SK-N-SH (cell line): ENCODE measurements at regions of chr3 and their contacts with region 1.

Region 1: DNA sequence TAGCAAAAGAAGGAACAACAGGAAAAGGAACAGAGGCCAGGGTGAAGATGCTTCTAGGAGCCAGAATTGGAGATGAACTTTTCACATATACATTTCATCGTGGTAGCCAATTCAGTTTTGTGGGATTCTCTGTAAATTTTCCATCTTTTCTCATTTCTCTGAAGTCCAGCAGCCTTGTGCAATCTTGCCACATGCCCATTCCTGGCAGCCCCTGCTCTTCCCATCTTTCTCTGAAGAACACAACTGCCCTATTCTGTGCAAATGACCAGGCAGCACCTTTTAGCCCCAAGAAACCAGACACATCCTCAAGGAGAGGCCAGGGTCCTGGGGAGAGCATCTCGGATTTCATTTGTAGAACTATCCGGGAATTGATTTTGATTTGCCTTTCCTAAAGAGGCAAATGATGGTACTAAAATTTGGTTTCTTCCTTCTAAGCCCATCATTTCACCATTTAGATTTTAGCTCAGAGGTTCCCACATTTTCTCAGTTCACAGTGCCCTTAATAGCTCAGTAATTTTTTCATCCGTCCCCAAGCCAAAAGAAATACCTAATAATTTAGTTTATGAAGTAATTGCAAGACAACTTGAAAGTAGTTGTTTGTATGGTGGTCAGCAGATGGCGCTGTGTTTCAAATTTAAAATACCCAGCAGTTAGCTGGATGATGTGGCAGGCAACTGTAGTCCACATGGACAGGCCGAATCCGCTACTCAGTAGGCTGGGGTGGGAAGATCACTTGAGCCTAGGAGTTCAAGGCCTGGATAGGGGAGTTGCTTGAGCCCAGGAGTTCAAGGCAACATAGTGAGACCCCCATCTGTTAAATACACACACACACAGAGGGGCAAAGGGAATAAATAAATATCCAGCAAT is 61.3 kb upstream of the ACKR4 start:
- DNase-seq: peak; percentile 52
- H3K4me3 ChIP-seq: no peak overlapping the region; a peak in 1 of 4 replicates
- H3K27ac ChIP-seq: peak overlapping the region in 1 of 2 experiments; percentile 39; a peak in 1 of 4 replicates
- H3K4me1 ChIP-seq: peaks cover 0 to 6% of the 10 kb centered on the region in 2 experiments; a peak in 1 of 4 replicates
- H3K27me3 ChIP-seq: no peaks in the 10 kb centered on the region
- CTCF ChIP-seq: peak; percentile 74
- EP300 ChIP-seq: no peak
- RAD21 ChIP-seq: peak; percentile 76

Region 2: GRCh38 chr3:132522353-132522752 is 13.5 kb before region 1 on chr3:
- CTCF ChIA-PET with region 1: interaction called, 20 read pairs
- POLR2A ChIA-PET with region 1: no interaction called
- DNase-seq: no peak
- H3K4me3 ChIP-seq: no peak overlapping the region
- H3K27ac ChIP-seq: no peak overlapping the region
- H3K4me1 ChIP-seq: no peaks in the 10 kb centered on the region
- H3K27me3 ChIP-seq: no peaks in the 10 kb centered on the region
- CTCF ChIP-seq: no peak
- EP300 ChIP-seq: no peak
- RAD21 ChIP-seq: no peak

Region 3: GRCh38 chr3:132549890-132550578 is 14.2 kb after region 1 on chr3:
- CTCF ChIA-PET with region 1: interaction called, 32 read pairs
- POLR2A ChIA-PET with region 1: no interaction called
- DNase-seq: no peak
- H3K4me3 ChIP-seq: no peak overlapping the region
- H3K27ac ChIP-seq: peak overlapping the region; percentile 60 to 72; a peak in 3 of 4 replicates
- H3K4me1 ChIP-seq: peaks cover 0 to 20% of the 10 kb centered on the region in 2 experiments; a peak in 2 of 4 replicates
- H3K27me3 ChIP-seq: no peaks in the 10 kb centered on the region
- CTCF ChIP-seq: no peak
- EP300 ChIP-seq: 0 out of 4 replicates have a peak, but pooled peaks of 1 of the 2 experiments have one; percentile 55
- RAD21 ChIP-seq: no peak

Region 4: DNA sequence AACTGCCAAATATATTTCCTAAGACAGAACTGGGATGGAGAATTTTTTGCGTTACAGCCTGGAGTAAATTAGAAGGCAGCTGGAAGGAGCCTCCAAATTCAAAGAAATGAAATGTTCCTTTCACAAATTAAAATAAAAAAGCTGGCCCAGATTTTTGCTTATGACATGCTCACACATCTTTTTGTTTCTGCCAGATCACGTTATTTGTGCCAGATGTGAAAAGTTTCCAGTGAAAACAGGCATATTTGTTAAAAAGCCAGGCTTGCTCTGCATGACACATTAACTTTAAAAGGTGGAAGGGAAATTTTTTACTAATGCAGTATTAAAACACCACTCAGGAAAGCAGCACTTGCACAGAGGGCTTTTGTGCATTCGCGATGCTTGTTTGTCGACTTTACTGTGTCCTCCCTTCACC is 38.0 kb after region 1 on chr3:
- CTCF ChIA-PET with region 1: interaction called, 12 read pairs
- POLR2A ChIA-PET with region 1: no interaction called
- DNase-seq: no peak
- H3K4me3 ChIP-seq: no peak overlapping the region
- H3K27ac ChIP-seq: peak overlapping the region in 1 of 2 experiments; percentile 44; a peak in 1 of 4 replicates
- H3K4me1 ChIP-seq: peaks cover 4 to 6% of the 10 kb centered on the region in 2 experiments; a peak in 2 of 4 replicates
- H3K27me3 ChIP-seq: no peaks in the 10 kb centered on the region
- CTCF ChIP-seq: no peak
- EP300 ChIP-seq: no peak
- RAD21 ChIP-seq: no peak

Region 5: DNA sequence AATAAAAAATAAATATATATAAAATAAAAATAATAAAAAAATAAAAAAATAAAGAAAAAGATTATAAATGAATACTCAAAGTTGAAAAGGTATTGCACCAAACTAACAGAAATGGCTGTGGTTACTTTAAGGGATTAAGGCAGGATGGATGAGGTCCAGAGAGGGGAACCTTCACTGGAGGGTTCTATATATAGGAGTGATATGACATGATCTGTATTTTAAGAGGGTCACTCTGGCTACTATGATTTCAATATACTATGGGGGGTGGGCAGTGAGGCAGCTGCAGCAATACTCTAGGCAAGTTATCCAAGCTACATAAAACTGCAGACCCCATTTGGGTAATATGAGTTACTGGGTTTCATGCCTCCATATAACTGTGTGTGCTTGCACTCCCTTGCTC is 99.2 kb after region 1 on chr3:
- CTCF ChIA-PET with region 1: interaction called, 121 read pairs
- POLR2A ChIA-PET with region 1: no interaction called
- DNase-seq: no peak
- H3K4me3 ChIP-seq: no peak overlapping the region
- H3K27ac ChIP-seq: no peak overlapping the region
- H3K4me1 ChIP-seq: peaks cover 0 to 22% of the 10 kb centered on the region in 2 experiments; a peak in 3 of 4 replicates
- H3K27me3 ChIP-seq: no peaks in the 10 kb centered on the region
- CTCF ChIP-seq: no peak
- EP300 ChIP-seq: no peak
- RAD21 ChIP-seq: no peak

Region 6: DNA sequence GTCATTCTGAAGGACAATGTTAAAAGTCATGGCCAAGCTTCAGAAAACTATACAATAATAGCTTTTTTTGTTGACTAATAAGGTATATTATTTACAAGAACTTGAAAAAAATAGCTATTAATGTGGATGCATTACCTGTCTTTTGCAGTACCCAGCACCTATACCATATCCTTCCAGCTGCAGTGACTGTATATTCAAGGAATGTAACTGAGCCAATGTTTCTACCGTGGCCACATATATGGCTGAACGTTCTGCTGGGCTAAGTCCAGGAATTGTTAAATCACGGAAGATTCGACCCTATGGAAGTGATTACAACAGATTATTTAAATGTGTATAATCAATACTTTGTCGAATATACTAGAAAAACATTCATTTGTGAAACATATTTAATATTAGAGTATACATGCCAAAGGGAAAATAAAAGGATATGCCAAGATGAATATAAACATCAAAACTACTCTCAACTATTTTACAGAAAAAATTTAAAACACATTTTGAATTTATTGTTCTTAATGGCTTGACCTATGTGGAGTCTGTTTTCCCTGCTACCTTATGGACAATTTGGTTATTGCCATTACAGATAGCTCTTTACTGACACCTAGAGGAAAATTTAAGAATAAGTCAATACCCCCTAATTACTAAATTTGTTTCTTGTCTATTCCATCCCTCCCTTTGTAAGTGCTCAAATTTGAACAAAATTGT is 106.2 kb after region 1 on chr3:
- CTCF ChIA-PET with region 1: interaction called, 121 read pairs
- POLR2A ChIA-PET with region 1: no interaction called
- DNase-seq: peak; percentile 70
- H3K4me3 ChIP-seq: no peak overlapping the region
- H3K27ac ChIP-seq: no peak overlapping the region
- H3K4me1 ChIP-seq: peaks cover 0 to 14% of the 10 kb centered on the region in 2 experiments; a peak in 3 of 4 replicates
- H3K27me3 ChIP-seq: no peaks in the 10 kb centered on the region
- CTCF ChIP-seq: peak; percentile 81
- EP300 ChIP-seq: no peak
- RAD21 ChIP-seq: peak; percentile 86

Region 7: GRCh38 chr3:132659365-132660051 is 123.7 kb after region 1 on chr3 and contains the start of gene ACAD11:
- CTCF ChIA-PET with region 1: interaction called, 10 read pairs
- POLR2A ChIA-PET with region 1: interaction called, 3 read pairs
- DNase-seq: peak; percentile 80
- H3K4me3 ChIP-seq: peak within 1 kb of the TSS; percentile 81 to 95
- H3K27ac ChIP-seq: peak within 1 kb of the TSS; percentile 85 to 95
- H3K4me1 ChIP-seq: peaks cover 9 to 16% of the 10 kb centered on the region in 2 experiments; a peak in 3 of 4 replicates
- H3K27me3 ChIP-seq: no peaks in the 10 kb centered on the region
- CTCF ChIP-seq: peak; percentile 65
- EP300 ChIP-seq: no peak
- RAD21 ChIP-seq: peak; percentile 61
- polyA plus RNA-seq, gene ACAD11: 16.3 and 29.2 TPM in 2 replicates